ENCODE measurements at regions of chr2 and their contacts with region 1.

Region 1: DNA sequence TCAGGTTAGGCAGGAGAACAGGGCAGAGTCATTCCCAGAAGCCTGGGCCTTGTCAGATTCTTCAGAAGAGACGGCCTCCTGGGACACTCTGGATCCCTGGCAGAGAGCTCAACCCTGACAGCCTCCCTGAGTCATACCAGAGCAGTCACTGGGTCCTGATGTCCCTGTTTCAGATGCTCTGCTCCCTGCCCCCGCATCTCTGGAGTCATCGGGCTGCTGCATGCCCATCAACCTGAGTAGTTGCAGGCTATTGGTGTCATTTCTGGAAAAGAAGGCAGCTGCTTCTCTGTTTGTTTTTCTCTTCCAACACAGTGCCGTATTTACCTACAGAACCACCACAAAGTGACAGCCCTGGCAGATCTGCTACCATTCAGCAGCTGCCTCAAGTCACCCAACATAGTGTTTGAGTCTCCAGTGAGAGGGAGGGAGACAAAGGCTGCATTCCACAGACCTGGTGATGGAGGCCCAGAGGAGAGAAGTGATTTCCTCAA is 145.1 kb downstream of the B3GNT2 start:
- DNase-seq: peak; percentile 78

Region 2: GRCh38 chr2:62014102-62014501 is 326.9 kb before region 1 on chr2:
- intact Hi-C with region 1: loop called (anchors 5 kb)
- DNase-seq: peak; percentile 78

Region 3: DNA sequence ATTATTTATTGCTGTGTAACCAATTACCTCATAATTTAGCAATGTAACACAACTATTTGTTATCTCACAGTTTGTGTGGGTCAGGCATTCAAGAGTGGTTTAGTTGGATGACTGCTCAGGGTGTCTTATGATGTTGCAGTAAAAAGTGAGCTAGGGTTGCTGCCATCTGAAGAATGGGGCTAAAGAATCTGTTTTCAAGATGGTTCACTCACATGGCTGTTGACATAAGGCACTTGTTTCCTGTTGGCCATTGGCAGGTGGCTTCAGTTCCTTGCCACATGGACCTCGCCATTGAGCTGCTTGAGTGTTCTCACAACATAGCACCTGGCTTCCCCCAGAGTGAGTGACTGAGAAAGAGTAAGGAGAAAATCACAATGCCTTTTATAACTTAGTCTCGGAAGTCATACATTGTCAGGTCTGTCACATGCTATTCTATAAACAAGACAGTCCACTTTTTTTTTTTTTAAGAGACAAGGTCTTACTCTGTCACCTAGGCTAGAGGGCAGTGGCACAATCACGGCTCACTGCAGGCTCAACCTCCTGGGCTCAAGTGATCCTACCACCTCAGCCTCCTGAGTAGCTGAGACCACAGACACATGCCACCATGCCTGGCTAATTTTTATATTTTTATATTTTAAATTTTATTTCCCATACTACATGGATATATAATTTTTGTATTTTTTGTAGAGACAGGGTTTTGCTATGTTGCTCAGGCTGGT is 41.9 kb after region 1 on chr2:
- intact Hi-C with region 1: loop called (anchors 5 kb)
- DNase-seq: no peak

Measured in cardiac septum (tissue), 1 donor.